CD14-positive monocyte (primary cell): ENCODE measurements at regions of chr18 and their contacts with region 1.

Region 1: GRCh38 chr18:2655178-2655953 is at the start of gene SMCHD1:
- DNase-seq: peak; percentile 74 to 85 (median 76)
- H3K4me3 ChIP-seq: peak within 1 kb of the TSS; percentile 78 to 100 (median 86)
- H3K4me3 Mint-ChIP-seq: peak within 1 kb of the TSS; percentile 95
- H3K27ac ChIP-seq: peak within 1 kb of the TSS; percentile 98
- H3K27ac Mint-ChIP-seq: peak within 1 kb of the TSS; percentile 96 to 98 (median 97)
- H3K4me1 ChIP-seq: peaks cover 60 to 73% of the 10 kb centered on the region in 2 donors
- H3K4me1 Mint-ChIP-seq: peaks cover 57% of the 10 kb centered on the region
- H3K27me3 ChIP-seq: no peaks in the 10 kb centered on the region
- H3K27me3 Mint-ChIP-seq: peaks cover 0 to 5% (median 0%) of the 10 kb centered on the region in 3 donors
- CTCF ChIP-seq: no peak
- polyA plus RNA-seq, gene SMCHD1: 12.7 to 45.5 (median 16.8) TPM

Region 2: DNA sequence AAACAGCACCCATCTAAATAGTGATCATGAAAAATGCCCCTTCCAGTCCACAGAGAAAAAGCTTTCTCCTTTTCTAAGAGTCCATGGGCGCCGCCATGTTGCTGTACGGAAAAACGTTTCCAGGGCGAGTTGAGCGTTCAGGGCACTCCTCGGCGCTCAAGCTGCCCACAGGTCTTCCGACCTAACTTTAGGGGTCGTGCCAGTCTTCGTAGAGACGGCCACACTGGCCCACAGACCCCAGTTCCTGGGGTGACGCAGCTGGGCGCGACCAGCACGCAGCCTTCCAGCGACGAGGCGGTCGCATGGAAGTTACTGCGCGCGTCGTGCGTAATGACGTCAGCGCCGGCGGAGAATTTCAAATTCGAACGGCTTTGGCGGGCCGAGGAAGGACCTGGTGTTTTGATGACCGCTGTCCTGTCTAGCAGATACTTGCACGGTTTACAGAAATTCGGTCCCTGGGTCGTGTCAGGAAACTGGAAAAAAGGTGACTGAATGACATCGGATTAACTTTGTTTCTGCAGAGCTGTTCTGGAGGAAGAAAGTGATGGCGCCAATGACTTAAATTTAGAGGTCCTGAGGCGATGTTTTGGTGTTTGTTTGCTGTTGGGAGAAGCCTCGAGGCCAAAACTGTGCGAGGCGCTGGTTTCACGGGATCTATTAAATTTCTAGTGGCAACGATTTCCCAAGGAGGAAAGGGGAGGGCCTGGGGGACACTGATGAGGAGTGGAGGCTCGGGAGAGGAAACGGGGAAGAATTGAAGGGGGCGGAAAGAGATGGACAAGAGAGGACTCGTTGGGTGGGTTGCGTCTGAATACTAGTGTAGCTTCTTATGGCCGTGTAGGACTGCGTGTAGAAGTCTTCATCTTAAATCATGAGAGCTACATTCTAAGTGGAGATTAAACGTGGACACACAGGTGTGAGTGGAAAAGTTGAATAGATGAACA is 83.9 kb before region 1 on chr18 and contains the starts of genes METTL4 and NDC80:
- intact Hi-C with region 1: loop called (anchors 2 to 10 kb)
- DNase-seq: peak; percentile 81 to 87 (median 86)
- H3K4me3 ChIP-seq: peak within 1 kb of the TSS; percentile 81 to 94 (median 90)
- H3K4me3 Mint-ChIP-seq: peak within 1 kb of the TSS; percentile 99 to 100
- H3K27ac ChIP-seq: peak within 1 kb of the TSS; percentile 94 to 100
- H3K27ac Mint-ChIP-seq: peak within 1 kb of the TSS; percentile 99 to 100 (median 99)
- H3K4me1 ChIP-seq: peaks cover 20 to 26% of the 10 kb centered on the region in 2 donors
- H3K4me1 Mint-ChIP-seq: peaks cover 35% of the 10 kb centered on the region
- H3K27me3 ChIP-seq: no peaks in the 10 kb centered on the region
- H3K27me3 Mint-ChIP-seq: no peaks in the 10 kb centered on the region
- CTCF ChIP-seq: no peak
- polyA plus RNA-seq, gene METTL4: 3.0 to 4.1 (median 3.3) TPM
- polyA plus RNA-seq, gene NDC80: 0.07 TPM in 1 of 3 donors, not detected in the others

Region 3: DNA sequence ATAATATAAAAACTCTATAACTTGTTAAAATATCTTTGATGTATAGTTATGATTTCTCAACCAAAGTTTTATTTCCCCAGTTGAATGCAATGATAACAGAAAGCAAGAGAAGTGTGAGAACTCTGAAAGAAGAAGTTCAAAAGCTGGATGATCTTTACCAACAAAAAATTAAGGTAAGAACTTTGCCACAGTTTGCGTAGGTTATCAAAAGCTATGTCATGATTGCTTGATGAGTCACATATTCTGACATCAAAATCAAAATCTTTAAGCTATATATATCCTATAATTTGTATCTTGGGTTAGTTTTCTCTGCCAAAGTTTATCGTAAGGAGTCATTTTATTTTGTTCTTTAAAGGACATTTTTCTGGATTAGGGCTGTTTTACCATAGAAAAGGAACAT is 49.0 kb before region 1 on chr18:
- intact Hi-C with region 1: loop called (anchors 5 to 10 kb)
- DNase-seq: peak in 1 of 3 donors; percentile 18
- H3K4me3 ChIP-seq: no peak overlapping the region
- H3K4me3 Mint-ChIP-seq: no peak overlapping the region
- H3K27ac ChIP-seq: peak overlapping the region in 1 of 2 donors; percentile 52
- H3K27ac Mint-ChIP-seq: peak overlapping the region in 4 of 7 donors; percentile 15 to 76 (median 58)
- H3K4me1 ChIP-seq: peaks cover 11 to 20% of the 10 kb centered on the region in 2 donors
- H3K4me1 Mint-ChIP-seq: peaks cover 28% of the 10 kb centered on the region
- H3K27me3 ChIP-seq: no peaks in the 10 kb centered on the region
- H3K27me3 Mint-ChIP-seq: no peaks in the 10 kb centered on the region
- CTCF ChIP-seq: no peak

Region 4: DNA sequence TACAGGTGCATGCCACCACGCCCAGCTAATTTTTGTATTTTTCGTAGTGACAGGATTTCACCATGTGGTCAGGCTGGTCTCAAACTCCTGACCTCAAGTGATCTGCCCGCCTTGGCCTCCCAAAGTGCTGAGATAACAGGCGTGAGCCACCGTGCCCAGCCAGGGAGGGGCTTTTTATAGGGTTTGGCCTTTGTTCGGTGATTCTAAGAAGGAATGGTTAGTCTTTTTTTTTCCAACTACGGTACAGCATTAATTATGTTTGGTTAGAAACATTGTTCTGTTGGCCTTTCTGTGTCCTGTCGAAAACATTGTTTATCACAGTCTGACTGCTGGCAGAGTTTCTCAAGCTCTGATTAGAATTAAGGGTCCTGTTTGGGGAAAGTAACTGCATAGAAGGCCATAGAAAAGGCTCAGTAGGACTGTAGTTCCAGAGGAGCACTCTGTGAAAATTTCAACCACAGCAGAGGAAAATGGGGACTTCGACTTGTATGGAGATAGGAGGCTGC is 19.2 kb before region 1 on chr18:
- intact Hi-C with region 1: loop called in 1 of 2 experiments (anchors 2 kb)
- DNase-seq: no peak
- H3K4me3 ChIP-seq: peak overlapping the region in 2 of 3 experiments; percentile 45 to 61
- H3K4me3 Mint-ChIP-seq: peak overlapping the region; percentile 54 to 83
- H3K27ac ChIP-seq: peak overlapping the region; percentile 41 to 88
- H3K27ac Mint-ChIP-seq: peak overlapping the region; percentile 91 to 97 (median 94)
- H3K4me1 ChIP-seq: peaks cover 55 to 60% of the 10 kb centered on the region in 2 donors
- H3K4me1 Mint-ChIP-seq: peaks cover 52% of the 10 kb centered on the region
- H3K27me3 ChIP-seq: no peaks in the 10 kb centered on the region
- H3K27me3 Mint-ChIP-seq: no peaks in the 10 kb centered on the region
- CTCF ChIP-seq: no peak